Sigmoid colon (tissue), 7 donors: ENCODE measurements at regions of chr17 and their contacts with region 1.

Region 1: GRCh38 chr17:1908699-1909309 is 79.0 kb downstream of the RPA1 start:
- DNase-seq: peak; percentile 75
- H3K4me3 ChIP-seq: peak overlapping the region in 1 of 4 donors; percentile 23
- H3K27ac ChIP-seq: no peak overlapping the region
- H3K4me1 ChIP-seq: peaks cover 0 to 12% (median 10%) of the 10 kb centered on the region in 4 donors
- H3K27me3 ChIP-seq: peaks cover 24 to 95% (median 65%) of the 10 kb centered on the region in 3 donors
- CTCF ChIP-seq: peak; percentile 34 to 72 (median 65)
- EP300 ChIP-seq: no peak
- POLR2A ChIP-seq: no peak

Region 2: DNA sequence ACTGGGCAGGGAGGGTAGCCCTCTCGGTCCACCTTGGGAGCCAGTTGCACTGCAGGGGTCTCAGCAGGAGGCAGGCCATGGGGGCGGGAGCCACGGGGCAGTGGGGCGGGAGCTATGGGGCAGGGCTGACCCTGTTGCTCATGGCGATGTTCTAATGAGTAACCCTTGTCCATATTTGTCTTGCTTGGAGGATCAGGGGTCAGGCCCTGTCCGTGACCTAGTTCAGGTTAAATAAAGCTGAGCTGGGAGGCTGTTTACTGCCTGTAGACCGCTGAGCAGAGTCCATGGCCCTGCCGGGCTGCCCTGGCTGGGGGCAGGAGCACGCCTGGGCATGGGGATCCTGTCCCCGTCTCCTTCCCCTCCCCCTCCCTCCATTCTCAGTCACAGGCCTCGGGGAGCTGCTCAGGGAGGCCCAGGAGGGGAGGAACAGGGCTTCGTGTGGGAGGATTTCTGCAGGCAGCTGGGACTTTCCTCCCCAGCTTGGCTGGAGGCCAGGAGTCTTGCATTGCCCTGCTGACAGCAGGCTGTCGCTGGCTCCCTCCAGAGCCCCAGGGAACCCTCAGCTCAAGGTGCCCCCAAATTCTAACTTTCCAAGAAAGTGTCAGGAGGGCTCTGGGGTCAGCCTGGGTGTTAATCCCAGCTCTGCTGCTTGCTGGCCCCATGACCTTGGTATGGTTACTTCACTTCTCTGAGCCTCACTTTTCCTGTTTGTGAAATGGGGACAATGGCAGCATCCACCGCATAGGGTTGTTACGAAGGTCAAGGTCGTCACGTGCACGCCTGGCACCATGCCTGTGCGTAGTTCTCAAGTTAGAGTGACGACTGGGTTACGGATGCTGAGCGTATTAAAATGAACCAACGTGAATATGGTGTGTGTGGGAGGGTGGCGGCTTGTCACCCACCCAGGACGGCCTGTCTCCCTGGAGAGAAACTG is 172.2 kb before region 1 on chr17:
- intact Hi-C with region 1: no loop called
- DNase-seq: peak; percentile 83
- H3K4me3 ChIP-seq: no peak overlapping the region
- H3K27ac ChIP-seq: peak overlapping the region in 3 of 4 donors; percentile 2 to 7 (median 4)
- H3K4me1 ChIP-seq: peaks cover 0 to 16% (median 12%) of the 10 kb centered on the region in 4 donors
- H3K27me3 ChIP-seq: no peaks in the 10 kb centered on the region
- CTCF ChIP-seq: no peak
- EP300 ChIP-seq: no peak
- POLR2A ChIP-seq: no peak

Region 3: DNA sequence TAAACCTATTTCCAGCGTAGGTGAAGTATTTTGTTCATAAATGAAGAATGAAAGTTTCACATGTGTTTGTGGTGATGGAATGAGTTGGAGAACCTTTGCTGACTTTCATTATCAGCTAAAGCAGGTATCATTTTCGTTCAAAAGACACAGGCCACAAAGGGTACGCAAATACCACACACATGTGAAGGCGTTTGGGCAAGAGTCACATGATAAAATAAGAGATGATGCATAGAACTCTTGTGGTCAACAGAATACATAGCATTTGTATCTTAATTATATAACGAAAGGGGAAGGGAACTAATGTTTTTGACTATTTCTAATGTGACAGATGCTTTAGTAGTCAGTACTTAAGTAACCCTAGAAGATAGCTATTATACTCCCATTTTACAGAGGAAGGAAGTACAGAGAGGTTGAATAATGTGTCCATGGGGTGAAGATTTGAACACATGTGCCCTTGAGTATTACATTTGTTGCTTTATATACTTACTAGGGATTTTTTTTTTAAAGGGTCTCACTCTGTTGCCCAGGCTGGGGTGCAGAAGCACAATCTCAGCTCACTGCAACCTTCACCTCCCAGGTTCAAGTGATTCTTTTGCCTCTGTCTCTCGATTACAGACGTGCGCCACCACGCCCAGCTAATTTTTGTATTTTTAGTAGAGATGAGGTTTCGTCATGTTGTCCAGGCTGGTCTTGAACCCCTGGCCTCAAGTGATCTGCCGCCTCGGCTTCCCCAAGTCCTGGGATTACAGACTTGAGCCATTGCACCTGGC is 74.2 kb before region 1 on chr17:
- intact Hi-C with region 1: no loop called
- DNase-seq: no peak
- H3K4me3 ChIP-seq: no peak overlapping the region
- H3K27ac ChIP-seq: no peak overlapping the region
- H3K4me1 ChIP-seq: peaks cover 0 to 18% (median 11%) of the 10 kb centered on the region in 4 donors
- H3K27me3 ChIP-seq: no peaks in the 10 kb centered on the region
- CTCF ChIP-seq: no peak
- EP300 ChIP-seq: no peak
- POLR2A ChIP-seq: no peak

Region 4: GRCh38 chr17:2025622-2026310 is 117.0 kb after region 1 on chr17:
- intact Hi-C with region 1: loop called (anchors 1 kb)
- DNase-seq: peak; percentile 83
- H3K4me3 ChIP-seq: peak overlapping the region; percentile 21 to 55 (median 48)
- H3K27ac ChIP-seq: peak overlapping the region in 2 of 4 donors; percentile 19 to 20
- H3K4me1 ChIP-seq: peaks cover 0 to 38% (median 38%) of the 10 kb centered on the region in 4 donors
- H3K27me3 ChIP-seq: peaks cover 20 to 74% (median 34%) of the 10 kb centered on the region in 3 donors
- CTCF ChIP-seq: peak; percentile 55 to 74 (median 60)
- EP300 ChIP-seq: no peak
- POLR2A ChIP-seq: no peak

Region 5: GRCh38 chr17:2041561-2042366 is 133.0 kb after region 1 on chr17 and contains the start of gene OVCA2:
- intact Hi-C with region 1: loop called (anchors 5 kb)
- DNase-seq: peak; percentile 97
- H3K4me3 ChIP-seq: peak within 1 kb of the TSS; percentile 60 to 79 (median 72)
- H3K27ac ChIP-seq: peak within 1 kb of the TSS; percentile 82 to 94 (median 88)
- H3K4me1 ChIP-seq: peaks cover 0 to 31% (median 30%) of the 10 kb centered on the region in 4 donors
- H3K27me3 ChIP-seq: no peaks in the 10 kb centered on the region
- CTCF ChIP-seq: peak in 3 of 4 experiments; percentile 16 to 42 (median 30)
- EP300 ChIP-seq: no peak
- POLR2A ChIP-seq: peak in 1 of 2 donors; percentile 21
- total RNA-seq, gene OVCA2: 26.3 to 43.0 (median 32.9) TPM